Activated T-helper 2 cell treated with anti-CD3 and anti-CD28 coated beads, Interferon-gamma antibody, Interleukin-2, Interleukin-4, amounts not matched to agents 10 μg/mL and 5 μg/mL and 100 μg/mL, durations not matched to agents 14 hours and 24 hours and 36 hours (primary cell): ENCODE measurements at regions of chr3 and their contacts with region 1.

Region 1: GRCh38 chr3:172550347-172550943 is 27.2 kb upstream of the TNFSF10 start:
- DNase-seq: peak; percentile 55
- H3K4me3 Mint-ChIP-seq: no peak overlapping the region
- H3K27ac Mint-ChIP-seq: peak overlapping the region; percentile 67
- H3K4me1 Mint-ChIP-seq: peaks cover 48% of the 10 kb centered on the region
- H3K27me3 Mint-ChIP-seq: no peaks in the 10 kb centered on the region

Region 2: DNA sequence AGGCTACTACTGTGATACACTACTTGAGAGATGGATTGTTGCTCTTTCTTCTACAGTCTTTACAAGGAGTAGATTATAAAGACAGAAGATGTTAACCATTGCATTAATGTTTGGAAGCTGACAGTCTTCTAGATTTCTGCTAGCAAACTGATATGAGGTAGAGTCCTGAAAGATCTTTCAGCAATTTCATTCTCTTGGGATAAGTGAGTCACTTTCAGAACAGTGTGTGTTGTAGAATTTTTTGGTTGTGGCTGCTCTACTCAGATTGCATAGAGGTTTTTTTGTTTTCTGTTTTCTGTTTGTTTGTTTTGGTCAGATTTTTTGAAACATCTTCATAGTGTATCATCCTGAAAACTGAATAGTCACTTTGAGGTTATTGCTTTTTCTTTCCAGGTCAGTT is 44.4 kb before region 1 on chr3:
- intact Hi-C with region 1: no loop called
- DNase-seq: no peak
- H3K4me3 Mint-ChIP-seq: no peak overlapping the region
- H3K27ac Mint-ChIP-seq: peak overlapping the region; percentile 64
- H3K4me1 Mint-ChIP-seq: peaks cover 34% of the 10 kb centered on the region
- H3K27me3 Mint-ChIP-seq: no peaks in the 10 kb centered on the region

Region 3: DNA sequence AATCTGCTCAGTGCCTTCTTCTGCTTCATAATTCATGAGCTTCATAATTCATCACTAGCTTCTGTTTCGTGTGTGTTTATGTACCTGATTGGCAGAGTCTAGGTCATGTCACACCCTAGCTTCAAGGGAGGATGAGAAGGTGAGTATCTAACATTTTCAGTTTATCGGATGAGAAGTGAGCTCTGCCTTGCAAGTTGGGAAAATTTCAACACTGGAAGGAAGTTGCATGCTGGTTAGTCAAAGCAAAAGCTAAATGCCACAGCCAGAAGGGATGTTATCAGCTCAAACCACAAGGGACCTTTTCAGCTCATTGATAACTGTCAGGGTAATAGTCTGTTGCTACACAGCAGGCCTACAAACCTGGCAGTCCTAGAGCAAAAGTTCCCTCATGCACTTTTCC is 19.9 kb before region 1 on chr3:
- intact Hi-C with region 1: loop called (anchors 1 kb)
- DNase-seq: peak; percentile 50
- H3K4me3 Mint-ChIP-seq: peak overlapping the region; percentile 22
- H3K27ac Mint-ChIP-seq: peak overlapping the region; percentile 78
- H3K4me1 Mint-ChIP-seq: peaks cover 46% of the 10 kb centered on the region
- H3K27me3 Mint-ChIP-seq: no peaks in the 10 kb centered on the region

Region 4: DNA sequence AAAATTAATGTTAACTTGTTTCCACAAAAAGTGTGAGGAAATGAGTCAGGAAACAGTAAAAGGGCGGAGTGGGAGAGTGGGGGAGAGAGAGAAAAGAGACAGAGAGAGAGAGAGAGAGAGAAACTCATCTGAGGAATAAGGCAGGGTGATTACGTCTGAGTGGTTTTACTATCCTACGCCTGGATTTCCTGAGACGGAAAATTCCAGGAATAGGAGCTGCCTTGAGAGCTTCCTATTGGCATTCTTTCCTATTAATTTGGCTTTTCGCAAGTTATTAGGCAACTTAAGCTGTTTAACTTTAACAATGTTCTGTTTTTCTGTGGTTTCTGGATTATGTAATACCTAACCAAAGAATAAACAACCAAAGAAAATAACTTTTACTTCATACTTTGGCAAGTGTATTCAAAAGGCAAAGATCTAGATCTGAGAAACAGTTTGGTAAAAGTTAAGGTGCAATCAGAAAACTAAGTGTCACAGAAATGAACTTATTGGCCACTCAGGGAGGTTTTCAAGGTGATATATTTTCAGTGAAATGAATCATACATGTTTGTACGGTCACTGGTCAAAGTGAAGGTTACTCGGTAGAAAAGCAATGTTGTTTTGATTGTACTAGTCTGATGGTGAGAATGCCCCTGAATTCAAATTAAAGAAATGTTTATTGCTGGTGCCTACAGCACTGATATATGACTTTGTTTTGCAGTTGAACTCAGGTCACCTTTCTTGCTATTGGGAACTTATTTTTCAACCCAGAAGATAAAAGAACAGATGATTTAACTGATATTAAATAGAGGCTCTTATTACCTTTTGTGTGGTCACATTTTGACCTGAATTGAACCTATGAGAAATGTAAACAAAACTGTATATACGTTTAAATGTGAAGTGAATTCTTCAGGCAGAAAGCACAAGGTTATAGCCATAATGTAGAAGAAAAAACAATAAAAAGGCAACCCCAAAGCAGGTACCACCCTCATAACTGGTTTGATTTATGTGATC is 12.7 kb after region 1 on chr3:
- intact Hi-C with region 1: loop called (anchors 1 kb)
- DNase-seq: peak; percentile 32
- H3K4me3 Mint-ChIP-seq: peak overlapping the region; percentile 40
- H3K27ac Mint-ChIP-seq: peak overlapping the region; percentile 89
- H3K4me1 Mint-ChIP-seq: peaks cover 47% of the 10 kb centered on the region
- H3K27me3 Mint-ChIP-seq: no peaks in the 10 kb centered on the region

Region 5: DNA sequence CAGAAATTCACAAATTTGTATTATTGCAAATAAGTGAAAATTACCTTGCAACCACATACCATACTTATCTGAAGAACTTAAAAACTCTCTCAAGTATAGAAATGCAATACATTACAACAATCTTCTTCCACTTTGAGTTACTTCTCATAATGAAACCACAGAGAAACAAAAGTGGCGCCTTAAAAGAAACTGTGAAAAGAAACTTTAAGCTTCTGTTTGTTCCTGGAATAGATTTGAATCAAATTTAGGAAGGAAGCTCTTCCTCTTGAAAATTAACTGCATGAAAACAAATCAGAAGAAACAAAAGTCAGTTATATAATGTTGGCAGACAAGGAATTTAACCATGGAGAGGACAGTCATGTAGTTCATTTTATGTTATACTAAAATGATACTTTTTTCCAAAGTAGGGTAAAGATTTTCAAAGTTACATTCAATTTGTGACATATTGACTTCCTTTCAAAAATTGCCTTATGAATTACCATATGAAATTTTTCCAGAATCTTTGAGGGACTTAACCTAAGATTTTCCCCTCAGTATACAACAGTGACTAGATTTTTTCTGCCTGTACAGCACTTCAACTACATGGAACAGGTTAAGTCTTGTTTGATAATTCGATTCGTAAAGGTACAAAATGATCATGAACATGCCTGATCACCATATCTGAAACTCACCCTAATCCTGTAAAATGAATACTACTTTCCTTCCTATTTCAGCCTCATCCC is 30.4 kb after region 1 on chr3:
- intact Hi-C with region 1: loop called (anchors 1 kb)
- DNase-seq: no peak
- H3K4me3 Mint-ChIP-seq: peak overlapping the region; percentile 49
- H3K27ac Mint-ChIP-seq: peak overlapping the region; percentile 82
- H3K4me1 Mint-ChIP-seq: peaks cover 91% of the 10 kb centered on the region
- H3K27me3 Mint-ChIP-seq: no peaks in the 10 kb centered on the region

Region 6: GRCh38 chr3:172601066-172601832 is 50.8 kb after region 1 on chr3:
- intact Hi-C with region 1: no loop called
- DNase-seq: no peak
- H3K4me3 Mint-ChIP-seq: no peak overlapping the region
- H3K27ac Mint-ChIP-seq: no peak overlapping the region
- H3K4me1 Mint-ChIP-seq: peaks cover 11% of the 10 kb centered on the region
- H3K27me3 Mint-ChIP-seq: peaks cover 6% of the 10 kb centered on the region

Region 7: DNA sequence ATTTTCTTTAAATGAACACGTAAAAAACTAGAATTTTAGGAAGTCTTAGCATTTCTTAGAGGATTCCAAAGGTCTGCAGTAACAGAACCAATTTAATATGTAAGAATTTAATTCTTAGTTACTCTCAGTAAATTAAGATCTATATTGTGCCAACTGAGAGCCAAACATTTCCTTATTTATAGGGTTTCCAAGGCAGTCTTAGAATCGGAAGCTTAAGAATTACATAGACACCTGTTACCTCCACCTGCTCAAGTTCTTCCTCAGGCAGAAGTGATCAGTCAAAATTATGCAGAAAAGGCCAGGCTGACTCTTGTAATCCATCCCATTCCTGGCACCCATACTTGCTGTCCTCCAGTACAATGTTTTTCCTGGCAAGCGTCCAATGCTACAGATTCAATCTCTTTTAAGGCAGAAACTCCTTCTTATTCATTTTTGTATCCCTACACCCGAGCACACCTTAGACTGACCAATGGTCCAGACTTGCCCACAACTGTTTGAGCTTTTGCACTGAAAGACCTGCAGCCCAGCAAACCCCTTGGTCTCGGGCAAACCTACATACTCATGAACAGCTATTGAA is 96.1 kb after region 1 on chr3:
- intact Hi-C with region 1: no loop called
- DNase-seq: no peak
- H3K4me3 Mint-ChIP-seq: no peak overlapping the region
- H3K27ac Mint-ChIP-seq: no peak overlapping the region
- H3K4me1 Mint-ChIP-seq: no peaks in the 10 kb centered on the region
- H3K27me3 Mint-ChIP-seq: no peaks in the 10 kb centered on the region